Gastrocnemius medialis (tissue), 4 donors: ENCODE measurements at regions of chr19 and their contacts with region 1.

Region 1: GRCh38 chr19:7293795-7294570 is at the start of gene INSR:
- DNase-seq: peak; percentile 86 to 93
- ATAC-seq: peak; percentile 82 to 90
- H3K4me3 ChIP-seq: peak within 1 kb of the TSS; percentile 76 to 98 (median 86)
- H3K27ac ChIP-seq: peak within 1 kb of the TSS; percentile 92 to 99 (median 98)
- H3K4me1 ChIP-seq: peaks cover 8 to 17% of the 10 kb centered on the region in 2 donors
- H3K27me3 ChIP-seq: no peaks in the 10 kb centered on the region
- CTCF ChIP-seq: no peak
- POLR2A ChIP-seq: peak; percentile 77 to 86
- total RNA-seq, gene INSR: 54.0 to 226 (median 71.1) TPM

Region 2: GRCh38 chr19:7098701-7099596 is 195.0 kb before region 1 on chr19:
- in situ Hi-C with region 1: no loop called
- intact Hi-C with region 1: loop called (anchors 1 kb)
- DNase-seq: peak; percentile 84 to 89
- ATAC-seq: peak; percentile 94 to 95
- H3K4me3 ChIP-seq: peak overlapping the region; percentile 73 to 92 (median 78)
- H3K27ac ChIP-seq: peak overlapping the region; percentile 92 to 99 (median 94)
- H3K4me1 ChIP-seq: peaks cover 0 to 9% of the 10 kb centered on the region in 2 donors
- H3K27me3 ChIP-seq: no peaks in the 10 kb centered on the region
- CTCF ChIP-seq: no peak
- POLR2A ChIP-seq: no peak

Region 3: DNA sequence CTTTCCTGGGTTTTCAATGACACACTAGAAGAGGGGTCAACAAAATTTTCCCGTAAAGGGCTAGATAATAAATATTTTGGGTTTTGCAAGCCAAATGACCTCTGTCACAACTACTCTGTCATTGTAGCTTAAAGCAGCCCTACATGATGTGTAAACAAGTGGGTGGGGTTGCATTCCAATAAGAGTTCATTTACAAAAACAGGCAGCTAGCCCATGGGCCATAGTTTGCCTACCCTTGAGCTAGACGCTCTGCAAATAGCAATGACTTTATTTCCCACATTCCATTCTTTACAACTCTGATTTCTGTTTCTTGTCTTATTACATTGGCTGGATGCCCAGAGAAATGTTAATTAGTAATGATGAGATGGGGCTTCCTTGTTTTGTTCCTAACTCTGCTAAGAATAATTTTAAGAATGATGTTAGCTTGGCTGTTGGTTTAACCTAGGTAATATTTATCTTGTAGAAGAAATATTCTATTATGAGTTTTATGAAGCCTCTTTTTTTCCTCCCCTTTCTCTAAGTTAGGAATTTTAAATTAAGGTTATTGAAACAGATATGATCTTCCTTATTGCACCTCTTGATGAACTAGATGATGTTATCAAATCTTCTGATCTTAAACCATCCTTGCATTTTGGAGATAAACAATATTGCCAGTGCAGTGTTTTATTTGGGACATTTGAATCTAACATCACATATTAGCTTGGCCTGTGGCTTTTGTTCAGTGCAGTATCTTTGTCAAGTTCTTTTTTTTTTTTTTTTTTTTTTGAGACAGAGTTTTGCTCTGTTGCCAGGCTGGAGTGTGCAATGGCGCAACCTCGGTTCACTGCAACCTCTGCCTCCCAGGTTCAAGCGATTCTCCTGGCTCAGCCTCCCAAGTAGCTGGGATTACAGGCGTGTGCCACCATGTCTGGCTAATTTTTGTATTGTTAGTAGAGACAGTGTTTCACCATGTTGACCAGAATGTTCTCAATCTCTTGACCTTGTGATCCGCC is 148.2 kb before region 1 on chr19:
- in situ Hi-C with region 1: loop called in 1 of 4 experiments (anchors 10 kb)
- intact Hi-C with region 1: loop called (anchors 1 kb)
- DNase-seq: no peak
- ATAC-seq: no peak
- H3K4me3 ChIP-seq: no peak overlapping the region
- H3K27ac ChIP-seq: peak overlapping the region; percentile 52 to 85 (median 68)
- H3K4me1 ChIP-seq: peaks cover 8 to 27% of the 10 kb centered on the region in 2 donors
- H3K27me3 ChIP-seq: no peaks in the 10 kb centered on the region
- CTCF ChIP-seq: no peak
- POLR2A ChIP-seq: no peak

Region 4: GRCh38 chr19:7242601-7243258 is 51.3 kb before region 1 on chr19:
- in situ Hi-C with region 1: loop called in 1 of 4 experiments (anchors 5 kb)
- intact Hi-C with region 1: loop called (anchors 2 kb)
- DNase-seq: peak in 1 of 2 donors; percentile 29
- ATAC-seq: peak; percentile 89 to 99
- H3K4me3 ChIP-seq: no peak overlapping the region
- H3K27ac ChIP-seq: peak overlapping the region; percentile 77 to 87 (median 82)
- H3K4me1 ChIP-seq: peaks cover 22 to 28% of the 10 kb centered on the region in 2 donors
- H3K27me3 ChIP-seq: no peaks in the 10 kb centered on the region
- CTCF ChIP-seq: no peak
- POLR2A ChIP-seq: no peak

Region 5: DNA sequence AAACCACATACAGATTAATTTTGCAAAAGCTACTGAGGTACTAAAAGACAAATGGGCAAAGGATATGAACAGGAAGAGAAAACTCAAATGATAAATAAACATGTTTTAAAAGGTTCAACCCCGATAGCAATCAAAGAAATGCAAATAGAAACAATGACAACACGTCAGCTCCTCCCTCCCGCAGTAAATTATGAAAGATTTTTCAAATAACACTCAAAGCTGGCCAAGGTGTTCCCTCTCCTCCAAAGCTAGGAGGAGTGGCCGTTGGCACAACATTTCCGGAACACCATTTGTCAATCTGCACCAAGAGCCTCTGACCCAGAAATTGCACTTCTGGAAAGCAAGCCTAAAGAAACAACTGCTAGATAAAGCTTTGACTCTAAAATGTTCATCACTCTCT is 28.0 kb before region 1 on chr19:
- in situ Hi-C with region 1: no loop called
- intact Hi-C with region 1: loop called (anchors 1 kb)
- DNase-seq: peak; percentile 53 to 63
- ATAC-seq: peak; percentile 90 to 96
- H3K4me3 ChIP-seq: no peak overlapping the region
- H3K27ac ChIP-seq: peak overlapping the region; percentile 40 to 77 (median 74)
- H3K4me1 ChIP-seq: peaks cover 20 to 46% of the 10 kb centered on the region in 2 donors
- H3K27me3 ChIP-seq: no peaks in the 10 kb centered on the region
- CTCF ChIP-seq: no peak
- POLR2A ChIP-seq: no peak

Region 6: GRCh38 chr19:7340959-7341837 is 47.2 kb after region 1 on chr19:
- in situ Hi-C with region 1: no loop called
- intact Hi-C with region 1: loop called (anchors 5 kb)
- DNase-seq: peak; percentile 43 to 57
- ATAC-seq: peak; percentile 39 to 58
- H3K4me3 ChIP-seq: no peak overlapping the region
- H3K27ac ChIP-seq: no peak overlapping the region
- H3K4me1 ChIP-seq: no peaks in the 10 kb centered on the region
- H3K27me3 ChIP-seq: no peaks in the 10 kb centered on the region
- CTCF ChIP-seq: peak; percentile 91 to 97 (median 95)
- POLR2A ChIP-seq: no peak